Gastrocnemius medialis (tissue), 4 donors: ENCODE measurements at regions of chr12 and their contacts with region 1.

Region 1: GRCh38 chr12:10690906-10691305 is 17.1 kb upstream of the STYK1 start:
- DNase-seq: no peak
- ATAC-seq: no peak
- H3K4me3 ChIP-seq: no peak overlapping the region
- H3K27ac ChIP-seq: peak overlapping the region in 1 of 4 donors; percentile 13
- H3K4me1 ChIP-seq: peaks cover 8 to 19% of the 10 kb centered on the region in 2 donors
- H3K27me3 ChIP-seq: no peaks in the 10 kb centered on the region
- CTCF ChIP-seq: no peak
- POLR2A ChIP-seq: no peak

Region 2: GRCh38 chr12:10624605-10625004 is 66.3 kb before region 1 on chr12:
- in situ Hi-C with region 1: loop called in 1 of 4 experiments (anchors 10 kb)
- intact Hi-C with region 1: no loop called
- DNase-seq: no peak
- ATAC-seq: no peak
- H3K4me3 ChIP-seq: no peak overlapping the region
- H3K27ac ChIP-seq: no peak overlapping the region
- H3K4me1 ChIP-seq: no peaks in the 10 kb centered on the region
- H3K27me3 ChIP-seq: no peaks in the 10 kb centered on the region
- CTCF ChIP-seq: no peak
- POLR2A ChIP-seq: no peak

Region 3: GRCh38 chr12:10726940-10727339 is 36.0 kb after region 1 on chr12:
- in situ Hi-C with region 1: no loop called
- intact Hi-C with region 1: loop called (anchors 5 kb)
- DNase-seq: no peak
- ATAC-seq: no peak
- H3K4me3 ChIP-seq: no peak overlapping the region
- H3K27ac ChIP-seq: no peak overlapping the region
- H3K4me1 ChIP-seq: peaks cover 7 to 8% of the 10 kb centered on the region in 2 donors
- H3K27me3 ChIP-seq: no peaks in the 10 kb centered on the region
- CTCF ChIP-seq: no peak
- POLR2A ChIP-seq: no peak